ENCODE measurements at regions of chr6 and their contacts with region 1.

Region 1: DNA sequence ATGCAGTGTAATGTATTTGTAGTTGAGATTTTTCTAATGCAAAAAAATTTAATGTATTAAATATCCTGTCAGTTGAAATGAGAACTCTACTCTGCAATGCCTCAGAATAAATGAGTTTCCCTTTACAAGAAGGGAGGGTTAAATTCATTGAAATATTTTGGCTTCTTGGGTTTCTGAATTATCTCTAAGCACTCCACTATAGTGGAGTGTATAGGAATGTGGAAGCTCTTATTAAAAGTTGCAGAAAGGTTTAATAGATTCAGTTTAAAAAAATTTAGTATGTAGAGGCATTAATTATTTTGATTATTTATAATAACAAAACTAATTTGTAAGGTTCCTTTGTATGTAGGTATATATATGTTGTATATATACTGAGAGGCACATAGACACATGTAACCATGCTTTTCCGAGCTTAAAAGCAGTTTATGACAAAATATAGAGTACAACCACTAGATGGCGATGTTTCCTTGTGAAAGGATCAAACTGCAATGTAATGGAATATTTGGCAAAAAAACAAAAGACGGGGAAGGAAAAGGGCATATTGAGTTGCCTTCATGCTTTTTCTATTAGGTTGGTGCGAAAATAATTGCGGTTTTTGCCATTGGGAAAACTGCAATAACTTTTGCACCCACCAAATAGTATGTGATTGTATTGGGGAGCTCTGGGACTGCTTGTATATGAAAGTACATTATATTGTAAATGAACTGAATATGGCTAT is 144.2 kb downstream of the MYO6 start:
- DNase-seq: no peak
- ATAC-seq: no peak
- H3K4me3 Mint-ChIP-seq: no peak overlapping the region
- H3K27ac Mint-ChIP-seq: no peak overlapping the region
- H3K4me1 Mint-ChIP-seq: no peaks in the 10 kb centered on the region
- H3K27me3 Mint-ChIP-seq: peaks cover 2% of the 10 kb centered on the region
- CTCF ChIP-seq: peak; percentile 47

Region 2: DNA sequence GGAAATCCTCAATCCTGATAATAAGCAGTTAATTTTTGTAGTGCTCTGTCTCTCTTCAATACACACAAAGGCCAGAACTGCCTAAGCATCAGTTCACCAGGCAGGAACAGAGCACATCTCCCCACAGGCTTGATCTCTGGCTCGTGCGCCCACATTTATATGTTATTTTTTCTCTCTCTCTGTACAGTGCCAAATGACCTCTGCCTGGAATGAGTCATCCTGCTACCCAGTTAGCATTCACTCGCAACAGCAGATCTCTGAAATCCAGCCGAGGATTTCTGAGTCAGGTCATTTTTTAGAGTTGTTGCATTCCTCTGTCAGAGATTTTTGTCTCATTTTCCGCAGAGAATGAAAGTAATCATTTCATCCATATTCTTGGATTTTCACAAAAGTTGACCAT is 794.5 kb before region 1 on chr6:
- CTCF ChIA-PET with region 1: no interaction called
- POLR2A ChIA-PET with region 1: no interaction called
- intact Hi-C with region 1: no loop called
- DNase-seq: no peak
- ATAC-seq: no peak
- H3K4me3 Mint-ChIP-seq: no peak overlapping the region
- H3K27ac Mint-ChIP-seq: no peak overlapping the region
- H3K4me1 Mint-ChIP-seq: no peaks in the 10 kb centered on the region
- H3K27me3 Mint-ChIP-seq: no peaks in the 10 kb centered on the region
- CTCF ChIP-seq: no peak

Region 3: GRCh38 chr6:75882734-75883133 is 10.5 kb before region 1 on chr6:
- CTCF ChIA-PET with region 1: interaction called, 16 read pairs
- POLR2A ChIA-PET with region 1: no interaction called
- intact Hi-C with region 1: no loop called
- DNase-seq: no peak
- ATAC-seq: no peak
- H3K4me3 Mint-ChIP-seq: no peak overlapping the region
- H3K27ac Mint-ChIP-seq: no peak overlapping the region
- H3K4me1 Mint-ChIP-seq: no peaks in the 10 kb centered on the region
- H3K27me3 Mint-ChIP-seq: no peaks in the 10 kb centered on the region
- CTCF ChIP-seq: no peak

Measured in activated B cell treated with CpG ODN at 0.5 μM for 24 hours (primary cell).